Dendritic cell treated with granulocyte-macrophage colony-stimulating factor and Interleukin-4, amounts not matched to agents 40 ng/mL and 50 ng/mL, for 4 days (primary cell): ENCODE measurements at regions of chr7 and their contacts with region 1.

Region 1: GRCh38 chr7:25179771-25180591 is 48.3 kb downstream of the NPVF start:
- H3K4me3 Mint-ChIP-seq: peak overlapping the region; percentile 88
- H3K27ac Mint-ChIP-seq: peak overlapping the region; percentile 88
- H3K4me1 Mint-ChIP-seq: peaks cover 20% of the 10 kb centered on the region
- H3K27me3 Mint-ChIP-seq: peaks cover 13% of the 10 kb centered on the region

Region 2: GRCh38 chr7:25125137-25125946 is 54.6 kb before region 1 on chr7 and contains the start of gene CYCS:
- intact Hi-C with region 1: loop called (anchors 2 kb)
- H3K4me3 Mint-ChIP-seq: peak within 1 kb of the TSS; percentile 100
- H3K27ac Mint-ChIP-seq: peak within 1 kb of the TSS; percentile 98
- H3K4me1 Mint-ChIP-seq: peaks cover 21% of the 10 kb centered on the region
- H3K27me3 Mint-ChIP-seq: peaks cover 4% of the 10 kb centered on the region